MCF 10A (cell line): ENCODE measurements at regions of chr9 and their contacts with region 1.

Region 1: GRCh38 chr9:77183581-77183980 is 6.2 kb downstream of the VPS13A start:
- DNase-seq: no peak
- H3K4me3 Mint-ChIP-seq: no peak overlapping the region
- H3K27ac Mint-ChIP-seq: no peak overlapping the region
- H3K4me1 Mint-ChIP-seq: peaks cover 14% of the 10 kb centered on the region
- H3K27me3 Mint-ChIP-seq: no peaks in the 10 kb centered on the region
- CTCF ChIP-seq: no peak

Region 2: GRCh38 chr9:76127637-76128036 is 1055.9 kb before region 1 on chr9:
- CTCF ChIA-PET with region 1: no interaction called
- POLR2A ChIA-PET with region 1: no interaction called
- intact Hi-C with region 1: no loop called
- DNase-seq: no peak
- H3K4me3 Mint-ChIP-seq: no peak overlapping the region
- H3K27ac Mint-ChIP-seq: no peak overlapping the region
- H3K4me1 Mint-ChIP-seq: no peaks in the 10 kb centered on the region
- H3K27me3 Mint-ChIP-seq: no peaks in the 10 kb centered on the region
- CTCF ChIP-seq: no peak

Region 3: GRCh38 chr9:77328102-77328501 is 144.5 kb after region 1 on chr9:
- CTCF ChIA-PET with region 1: no interaction called
- POLR2A ChIA-PET with region 1: no interaction called
- intact Hi-C with region 1: loop called (anchors 10 kb)
- DNase-seq: no peak
- H3K4me3 Mint-ChIP-seq: no peak overlapping the region
- H3K27ac Mint-ChIP-seq: no peak overlapping the region
- H3K4me1 Mint-ChIP-seq: no peaks in the 10 kb centered on the region
- H3K27me3 Mint-ChIP-seq: no peaks in the 10 kb centered on the region
- CTCF ChIP-seq: no peak